ENCODE measurements at regions of chr10 and their contacts with region 1.

Region 1: GRCh38 chr10:101782811-101783735 is at the start of gene NPM3:
- DNase-seq: peak; percentile 92

Region 2: DNA sequence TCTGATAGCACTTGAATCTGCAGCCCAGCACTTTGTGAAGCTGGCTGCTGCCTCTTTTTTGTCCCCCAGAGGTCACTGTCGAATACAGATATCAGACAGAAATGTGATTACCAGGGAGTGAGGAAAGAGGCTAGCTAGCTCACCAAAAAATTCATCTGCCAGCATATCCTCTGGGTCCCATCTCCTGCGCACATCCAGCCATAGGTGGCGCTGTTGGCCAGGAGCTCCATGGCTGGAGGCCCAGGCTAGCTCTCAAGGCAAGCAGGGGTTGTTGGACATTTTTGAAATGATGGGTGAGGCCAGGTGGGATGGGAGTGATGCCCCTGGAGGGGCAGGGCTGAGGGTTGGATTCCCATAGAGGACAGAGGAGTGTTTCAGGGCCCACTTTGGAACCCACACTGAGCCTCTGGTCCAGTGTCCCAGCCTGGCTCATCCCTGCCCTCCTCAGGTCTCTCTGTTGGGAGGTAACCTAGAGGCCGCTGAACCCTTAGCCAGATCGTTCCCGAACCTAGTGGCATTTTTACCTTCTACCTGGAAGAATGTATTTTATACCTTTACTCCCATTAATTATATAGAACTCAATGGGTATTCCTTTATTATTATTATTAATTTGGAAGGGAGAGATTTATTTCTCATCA is 180.2 kb before region 1 on chr10:
- CTCF ChIA-PET with region 1: interaction called, 41 read pairs
- POLR2A ChIA-PET with region 1: interaction called, 9 read pairs
- DNase-seq: peak; percentile 94

Region 3: GRCh38 chr10:101759309-101760247 is 23.5 kb before region 1 on chr10:
- CTCF ChIA-PET with region 1: interaction called, 13 read pairs
- POLR2A ChIA-PET with region 1: no interaction called
- DNase-seq: no peak

Measured in HEK293T (cell line).